Heart left ventricle (tissue), 16 donors: ENCODE measurements at regions of chr13 and their contacts with region 1.

Region 1: DNA sequence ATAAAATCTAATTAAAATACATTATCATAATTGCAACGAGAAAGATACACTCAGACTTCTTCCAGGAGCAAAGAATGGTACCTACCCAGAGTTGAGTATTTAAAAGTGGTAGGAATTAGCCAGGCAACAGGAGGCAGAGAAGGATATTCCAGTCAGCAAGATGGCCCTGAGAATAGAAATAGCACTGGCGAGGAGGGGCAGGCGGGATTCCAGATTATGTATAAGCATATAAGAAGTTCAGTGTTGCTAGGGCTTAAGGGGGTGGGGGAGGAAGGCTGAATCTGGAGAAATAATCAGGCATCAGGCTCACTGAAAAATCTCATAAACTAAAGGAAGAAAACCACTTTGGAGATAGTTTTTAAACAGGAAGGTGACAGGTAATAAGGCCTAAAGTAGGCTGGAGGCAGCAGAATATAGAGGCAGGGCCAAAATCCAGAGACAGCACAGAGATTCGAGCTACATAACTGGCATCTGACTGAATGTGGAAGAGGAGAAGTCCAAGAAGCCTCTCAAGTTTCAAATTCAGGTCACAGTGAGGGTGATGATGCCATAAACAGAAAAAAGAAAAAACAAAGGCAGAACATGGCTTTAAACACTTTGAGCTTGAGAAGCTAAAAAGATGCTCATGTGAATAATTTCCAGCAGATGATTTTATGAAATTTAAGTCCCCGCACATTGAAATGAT is 7.5 kb downstream of the KPNA3 start:
- DNase-seq: no peak
- ATAC-seq: no peak
- H3K4me3 ChIP-seq: no peak overlapping the region
- H3K27ac ChIP-seq: no peak overlapping the region
- H3K4me1 ChIP-seq: peaks cover 0 to 65% (median 36%) of the 10 kb centered on the region in 12 donors
- H3K27me3 ChIP-seq: no peaks in the 10 kb centered on the region
- CTCF ChIP-seq: no peak
- POLR2A ChIP-seq: no peak

Region 2: GRCh38 chr13:49690992-49691886 is 93.8 kb before region 1 on chr13 and contains the start of gene EBPL:
- intact Hi-C with region 1: loop called in 7 of 10 experiments (anchors 5 to 10 kb)
- DNase-seq: peak; percentile 91 to 96 (median 94)
- ATAC-seq: peak; percentile 96 to 100 (median 100)
- H3K4me3 ChIP-seq: peak within 1 kb of the TSS; percentile 18 to 97 (median 74)
- H3K27ac ChIP-seq: peak within 1 kb of the TSS; percentile 17 to 90 (median 76)
- H3K4me1 ChIP-seq: peaks cover 0 to 15% (median 6%) of the 10 kb centered on the region in 12 donors
- H3K27me3 ChIP-seq: no peaks in the 10 kb centered on the region
- CTCF ChIP-seq: peak in 2 of 12 donors; percentile 8 to 11
- POLR2A ChIP-seq: peak in 1 of 2 donors; percentile 23
- total RNA-seq, gene EBPL: 3.2 to 13.8 (median 5.8) TPM

Region 3: GRCh38 chr13:49739498-49740187 is 45.4 kb before region 1 on chr13:
- intact Hi-C with region 1: loop called in 1 of 10 experiments (anchors 5 kb)
- DNase-seq: no peak
- ATAC-seq: no peak
- H3K4me3 ChIP-seq: no peak overlapping the region
- H3K27ac ChIP-seq: no peak overlapping the region
- H3K4me1 ChIP-seq: no peaks in the 10 kb centered on the region
- H3K27me3 ChIP-seq: no peaks in the 10 kb centered on the region
- CTCF ChIP-seq: no peak
- POLR2A ChIP-seq: no peak